CD4-positive, alpha-beta memory T cell (primary cell): ENCODE measurements at regions of chr19 and their contacts with region 1.

Region 1: GRCh38 chr19:9865732-9866501 is 30.8 kb downstream of the PIN1 start:
- DNase-seq: peak; percentile 67 to 76 (median 70)
- H3K4me3 ChIP-seq: no peak overlapping the region
- H3K4me3 Mint-ChIP-seq: peak overlapping the region in 7 of 8 donors; percentile 45 to 85 (median 77)
- H3K27ac ChIP-seq: no peak overlapping the region
- H3K27ac Mint-ChIP-seq: peak overlapping the region; percentile 38 to 95 (median 74)
- H3K4me1 ChIP-seq: peaks cover 63% of the 10 kb centered on the region
- H3K4me1 Mint-ChIP-seq: peaks cover 33 to 58% (median 46%) of the 10 kb centered on the region in 4 donors
- H3K27me3 ChIP-seq: no peaks in the 10 kb centered on the region
- H3K27me3 Mint-ChIP-seq: no peaks in the 10 kb centered on the region

Region 2: GRCh38 chr19:9834726-9835506 is 31.0 kb before region 1 on chr19 and contains the start of gene PIN1:
- CTCF ChIA-PET with region 1: interaction called, 3 read pairs
- POLR2A ChIA-PET with region 1: interaction called, 9 read pairs
- intact Hi-C with region 1: loop called (anchors 1 kb)
- DNase-seq: peak; percentile 99 to 100 (median 99)
- H3K4me3 ChIP-seq: peak within 1 kb of the TSS; percentile 55 to 97
- H3K4me3 Mint-ChIP-seq: peak within 1 kb of the TSS; percentile 93 to 97 (median 96)
- H3K27ac ChIP-seq: peak within 1 kb of the TSS; percentile 74
- H3K27ac Mint-ChIP-seq: peak within 1 kb of the TSS; percentile 91 to 99 (median 97)
- H3K4me1 ChIP-seq: peaks cover 14% of the 10 kb centered on the region
- H3K4me1 Mint-ChIP-seq: peaks cover 10 to 34% (median 19%) of the 10 kb centered on the region in 4 donors
- H3K27me3 ChIP-seq: no peaks in the 10 kb centered on the region
- H3K27me3 Mint-ChIP-seq: no peaks in the 10 kb centered on the region
- total RNA-seq, gene PIN1: 72.1 to 76.9 TPM